ENCODE measurements at regions of chr10 and their contacts with region 1.

Region 1: GRCh38 chr10:58531084-58531695 is 18.5 kb downstream of the BICC1 start:
- DNase-seq: peak; percentile 68
- H3K4me3 ChIP-seq: no peak overlapping the region
- H3K27ac ChIP-seq: no peak overlapping the region
- H3K4me1 ChIP-seq: peaks cover 4% of the 10 kb centered on the region
- H3K27me3 ChIP-seq: no peaks in the 10 kb centered on the region
- CTCF ChIP-seq: peak; percentile 77 to 82

Region 2: DNA sequence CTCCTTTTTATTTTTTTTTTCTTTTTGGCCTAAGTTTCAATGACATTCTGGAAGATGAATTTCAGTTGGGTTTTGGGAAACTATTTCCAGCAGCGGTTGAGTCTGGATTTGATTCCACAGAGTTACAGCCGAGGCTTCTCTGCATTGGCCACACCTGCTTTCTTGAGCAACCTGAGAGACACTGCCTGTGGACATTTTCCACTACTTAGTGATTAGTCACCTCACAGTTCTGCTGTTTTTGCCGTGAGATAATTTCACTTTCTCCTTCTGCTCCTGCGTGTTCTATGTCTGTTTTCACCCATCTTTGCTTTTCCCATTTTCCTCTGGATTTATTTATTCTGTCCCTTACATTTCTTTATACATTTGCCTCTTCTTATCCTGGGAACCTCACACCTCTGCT is 224.5 kb after region 1 on chr10:
- CTCF ChIA-PET with region 1: no interaction called
- dilution Hi-C with region 1: no loop called
- in situ Hi-C with region 1: loop called in 1 of 2 experiments (anchors 25 kb)
- intact Hi-C with region 1: no loop called
- DNase-seq: peak; percentile 77
- H3K4me3 ChIP-seq: peak overlapping the region; percentile 39 to 64 (median 61)
- H3K27ac ChIP-seq: peak overlapping the region; percentile 87
- H3K4me1 ChIP-seq: peaks cover 12% of the 10 kb centered on the region
- H3K27me3 ChIP-seq: no peaks in the 10 kb centered on the region
- CTCF ChIP-seq: no peak

Region 3: DNA sequence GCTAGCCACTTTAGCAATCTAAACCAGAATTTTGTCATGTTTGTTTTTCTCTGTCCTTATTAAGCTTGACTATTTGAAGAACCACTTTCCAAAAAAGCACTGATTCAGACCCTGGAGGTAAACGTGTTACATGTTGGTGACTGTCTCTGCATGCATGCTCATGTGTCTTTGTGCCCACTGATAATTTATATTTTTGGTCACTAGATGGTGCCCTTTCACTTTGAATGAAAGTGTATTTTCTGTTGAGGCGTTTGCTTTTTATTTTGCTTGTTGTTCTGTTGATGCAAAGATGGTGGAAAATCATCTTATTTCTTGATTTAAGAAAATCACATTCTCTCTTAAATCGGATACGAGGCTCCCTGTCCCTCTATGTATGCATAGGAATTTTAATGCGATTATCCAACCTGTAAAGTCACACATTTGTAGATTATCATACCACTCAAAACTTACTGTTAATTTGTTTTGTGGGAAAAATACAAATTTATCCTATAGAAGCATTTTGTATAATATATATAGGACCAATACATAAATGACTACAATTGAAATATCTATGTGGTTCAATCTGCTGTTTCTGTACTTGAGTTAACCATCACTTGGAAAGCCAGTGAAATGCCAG is 250.8 kb after region 1 on chr10:
- CTCF ChIA-PET with region 1: interaction called, 6 read pairs
- dilution Hi-C with region 1: no loop called
- in situ Hi-C with region 1: no loop called
- intact Hi-C with region 1: loop called (anchors 1 kb)
- DNase-seq: peak; percentile 47
- H3K4me3 ChIP-seq: no peak overlapping the region
- H3K27ac ChIP-seq: no peak overlapping the region
- H3K4me1 ChIP-seq: peaks cover 3% of the 10 kb centered on the region
- H3K27me3 ChIP-seq: no peaks in the 10 kb centered on the region
- CTCF ChIP-seq: peak; percentile 49 to 50

Region 4: GRCh38 chr10:59181668-59182067 is 650.5 kb after region 1 on chr10:
- CTCF ChIA-PET with region 1: no interaction called
- dilution Hi-C with region 1: no loop called
- in situ Hi-C with region 1: no loop called
- intact Hi-C with region 1: loop called (anchors 2 kb)
- DNase-seq: peak; percentile 47
- H3K4me3 ChIP-seq: no peak overlapping the region
- H3K27ac ChIP-seq: no peak overlapping the region
- H3K4me1 ChIP-seq: peaks cover 8% of the 10 kb centered on the region
- H3K27me3 ChIP-seq: peaks cover 2% of the 10 kb centered on the region
- CTCF ChIP-seq: peak; percentile 58 to 72

Region 5: DNA sequence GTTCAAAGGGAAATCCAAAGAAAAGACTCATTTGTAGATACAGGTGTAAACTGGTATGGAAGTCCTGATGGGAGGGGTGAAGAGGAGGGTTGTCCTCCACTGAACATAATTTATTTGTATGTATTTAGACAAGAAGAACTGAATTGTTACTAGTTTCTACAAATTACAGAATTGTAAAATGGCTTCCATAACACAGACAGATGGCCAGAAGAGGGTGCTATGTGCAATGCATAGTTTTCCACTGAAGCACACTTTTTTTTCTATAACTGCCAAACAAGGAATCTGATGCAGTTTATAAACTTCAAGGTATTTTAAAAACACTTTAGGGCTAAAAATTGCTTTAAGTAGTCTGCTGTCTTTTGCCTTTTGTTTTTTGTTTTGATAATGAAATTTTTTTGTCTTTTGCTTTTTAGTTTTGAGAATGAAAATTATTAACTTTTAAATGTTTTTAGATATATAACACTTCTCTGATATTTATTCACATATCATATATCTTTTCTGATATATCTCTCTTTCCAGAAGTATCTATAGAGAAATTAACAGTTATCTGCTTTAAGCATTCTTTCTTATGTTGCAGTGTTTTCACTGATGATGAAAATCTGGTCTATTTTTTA is 703.7 kb after region 1 on chr10:
- CTCF ChIA-PET with region 1: no interaction called
- dilution Hi-C with region 1: no loop called
- in situ Hi-C with region 1: no loop called
- intact Hi-C with region 1: loop called (anchors 2 kb)
- DNase-seq: peak; percentile 12
- H3K4me3 ChIP-seq: no peak overlapping the region
- H3K27ac ChIP-seq: no peak overlapping the region
- H3K4me1 ChIP-seq: no peaks in the 10 kb centered on the region
- H3K27me3 ChIP-seq: no peaks in the 10 kb centered on the region
- CTCF ChIP-seq: peak; percentile 56 to 72